Activated naive CD4-positive, alpha-beta T cell treated with anti-CD3 and anti-CD28 coated beads, Interleukin-2, amount 10 ng/mL, durations not matched to agents 7 days and 5 days (primary cell): ENCODE measurements at regions of chr17 and their contacts with region 1.

Region 1: DNA sequence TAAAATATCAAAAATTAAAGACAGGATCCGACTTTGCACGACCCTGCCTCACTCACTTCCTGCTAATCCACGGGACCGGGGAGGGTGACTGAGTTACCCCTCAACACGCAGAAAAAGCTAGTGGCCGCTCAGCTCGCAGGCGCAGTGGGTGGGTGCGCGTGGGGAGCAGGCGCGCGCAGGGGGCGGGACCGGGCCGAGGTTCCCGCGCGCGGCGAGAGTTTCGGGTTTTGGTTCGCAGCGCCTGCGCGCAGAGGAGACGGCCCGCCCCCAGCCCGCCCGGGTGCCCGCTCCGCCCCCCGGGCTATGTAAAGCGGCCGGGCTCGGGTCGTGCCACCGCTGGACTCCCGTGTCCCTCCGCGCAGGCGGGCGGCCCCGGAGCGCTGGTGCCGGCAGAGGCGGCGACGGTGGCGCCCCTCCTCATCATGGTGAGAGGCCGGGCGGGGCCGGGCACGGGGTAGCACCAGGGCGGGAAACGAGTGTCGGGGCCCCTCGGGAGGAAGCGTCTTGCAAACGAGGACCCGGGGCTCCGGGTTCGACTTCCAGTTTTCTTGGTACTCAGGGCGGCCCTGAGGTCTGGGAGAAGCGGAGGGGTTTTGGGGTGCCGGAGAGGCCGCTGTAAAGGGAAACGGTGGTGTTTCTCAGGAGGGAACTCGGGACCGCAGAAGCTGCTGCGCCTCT is at the start of gene CNP:
- DNase-seq: peak; percentile 93
- H3K4me3 Mint-ChIP-seq: peak within 1 kb of the TSS; percentile 82
- H3K27ac Mint-ChIP-seq: peak within 1 kb of the TSS; percentile 89
- H3K4me1 Mint-ChIP-seq: peaks cover 46% of the 10 kb centered on the region
- H3K27me3 Mint-ChIP-seq: peaks cover 29% of the 10 kb centered on the region

Region 2: DNA sequence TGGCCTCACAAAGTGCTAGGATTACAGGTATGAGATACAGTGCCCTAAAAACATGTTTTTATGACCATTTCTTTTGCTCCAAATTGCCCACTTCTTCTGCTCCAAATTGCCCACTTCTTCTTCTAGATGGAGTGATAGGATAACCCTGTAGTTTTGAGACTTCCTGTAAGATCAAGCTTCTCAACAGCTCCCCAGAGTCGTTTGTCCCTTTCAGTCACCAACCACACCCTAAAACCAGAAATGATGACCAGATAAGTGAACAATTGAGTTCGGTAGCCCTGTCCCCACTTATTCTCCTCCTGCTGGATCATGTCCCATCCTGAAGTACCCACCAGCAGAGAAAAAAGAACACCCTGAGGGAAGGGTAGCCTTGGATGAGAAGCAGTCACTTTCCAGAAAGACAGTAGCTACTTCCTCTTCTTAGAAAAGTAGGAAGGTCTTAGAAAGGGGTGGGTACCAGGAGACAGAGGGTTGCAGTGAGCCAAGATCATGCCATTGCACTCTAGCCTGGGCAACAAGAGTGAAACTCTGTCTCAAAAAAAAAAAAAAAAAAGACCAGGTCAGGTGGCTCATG is 33.7 kb before region 1 on chr17:
- CTCF ChIA-PET with region 1: interaction called, 12 read pairs
- DNase-seq: no peak
- H3K4me3 Mint-ChIP-seq: peak overlapping the region; percentile 46
- H3K27ac Mint-ChIP-seq: peak overlapping the region; percentile 89
- H3K4me1 Mint-ChIP-seq: peaks cover 52% of the 10 kb centered on the region
- H3K27me3 Mint-ChIP-seq: no peaks in the 10 kb centered on the region

Region 3: DNA sequence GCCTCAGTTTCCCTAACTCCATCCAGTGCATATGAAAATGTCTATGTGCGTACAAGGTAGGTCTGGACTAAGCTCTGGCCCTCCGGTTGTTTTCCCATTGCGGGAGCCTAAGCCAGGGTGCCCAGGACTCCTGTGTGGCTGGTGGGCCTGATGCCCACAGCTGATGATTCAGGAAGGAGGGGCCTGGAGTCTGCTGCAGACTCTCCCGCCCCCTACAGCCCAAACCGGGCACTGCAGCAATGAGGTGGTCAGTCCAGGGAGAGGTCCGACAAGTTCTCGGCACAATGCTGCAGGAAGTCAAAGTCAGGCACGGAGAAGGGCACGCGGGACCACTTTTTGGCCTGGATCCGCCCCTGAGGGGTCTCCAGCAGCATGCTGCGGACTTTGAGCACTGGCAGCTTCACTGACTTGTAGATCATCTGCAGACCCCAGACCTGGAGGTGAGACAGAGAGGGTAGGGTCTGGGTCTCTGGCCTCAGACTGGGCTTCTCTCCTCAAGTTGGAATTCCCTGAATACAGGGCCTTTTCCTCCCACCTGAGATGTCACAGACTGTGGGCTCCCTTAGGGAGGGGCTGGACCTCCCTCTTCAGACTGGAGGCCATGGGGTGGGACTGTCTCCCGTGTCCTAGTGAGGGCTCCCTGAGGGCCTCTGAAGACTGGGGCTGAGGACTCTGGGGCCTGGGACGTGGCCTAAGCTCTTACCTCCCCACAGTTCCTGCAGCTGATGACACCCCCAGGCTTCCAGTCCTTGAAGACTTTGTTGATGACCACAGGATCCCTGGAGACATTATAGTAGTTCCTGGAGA is 135.1 kb after region 1 on chr17:
- CTCF ChIA-PET with region 1: interaction called, 12 read pairs
- DNase-seq: peak; percentile 80
- H3K4me3 Mint-ChIP-seq: no peak overlapping the region
- H3K27ac Mint-ChIP-seq: no peak overlapping the region
- H3K4me1 Mint-ChIP-seq: peaks cover 11% of the 10 kb centered on the region
- H3K27me3 Mint-ChIP-seq: peaks cover 29% of the 10 kb centered on the region

Region 4: DNA sequence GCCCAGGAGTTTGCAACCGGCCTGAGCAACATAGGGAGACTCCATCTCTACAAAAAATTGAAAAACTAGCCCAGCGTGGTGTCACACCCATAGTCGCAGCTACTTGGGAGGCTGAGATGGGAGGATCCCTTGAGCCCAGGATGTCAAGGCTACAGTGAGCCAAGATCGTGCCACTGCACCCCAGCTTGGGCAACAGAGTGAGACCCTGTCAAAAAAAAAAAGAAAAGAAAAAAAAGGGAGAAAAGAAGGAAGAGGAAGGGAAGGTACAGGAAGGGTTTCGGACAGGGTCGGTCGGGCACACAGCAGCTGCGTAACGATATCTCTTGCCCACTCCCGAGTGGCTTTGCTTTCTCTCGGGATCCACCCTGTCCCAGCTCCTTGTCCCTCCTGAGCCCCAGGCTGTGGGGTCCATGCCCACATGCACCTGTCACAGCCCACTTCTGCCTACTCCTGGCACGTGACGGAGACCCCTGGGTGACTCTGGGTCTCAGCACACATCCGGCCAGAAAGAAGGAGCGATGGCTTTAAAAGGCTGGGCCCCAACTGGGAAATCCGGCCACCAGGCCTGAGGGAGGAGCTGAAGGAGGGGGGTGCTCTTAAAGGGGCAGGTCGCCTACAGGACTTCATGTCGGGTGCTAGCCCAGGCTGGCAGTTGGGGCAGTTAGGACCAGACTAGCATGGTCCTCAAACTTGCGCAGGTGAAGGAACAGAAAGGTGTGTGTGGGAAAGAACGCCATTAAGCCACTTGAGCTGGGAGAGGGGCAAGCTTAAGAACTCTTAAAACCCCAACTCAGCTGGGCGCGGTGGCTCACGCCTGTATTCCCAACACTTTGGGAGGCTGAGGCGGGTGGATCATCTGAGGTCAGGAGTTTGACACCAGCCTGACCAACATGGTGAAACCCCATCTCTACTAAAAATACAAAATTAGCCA is 227.6 kb after region 1 on chr17 and contains the start of gene GHDC:
- CTCF ChIA-PET with region 1: no interaction called
- DNase-seq: peak; percentile 90
- H3K4me3 Mint-ChIP-seq: peak within 1 kb of the TSS; percentile 86
- H3K27ac Mint-ChIP-seq: peak within 1 kb of the TSS; percentile 80
- H3K4me1 Mint-ChIP-seq: peaks cover 25% of the 10 kb centered on the region
- H3K27me3 Mint-ChIP-seq: no peaks in the 10 kb centered on the region